K562 (cell line): ENCODE measurements at regions of chr4 and their contacts with region 1.

Region 1: DNA sequence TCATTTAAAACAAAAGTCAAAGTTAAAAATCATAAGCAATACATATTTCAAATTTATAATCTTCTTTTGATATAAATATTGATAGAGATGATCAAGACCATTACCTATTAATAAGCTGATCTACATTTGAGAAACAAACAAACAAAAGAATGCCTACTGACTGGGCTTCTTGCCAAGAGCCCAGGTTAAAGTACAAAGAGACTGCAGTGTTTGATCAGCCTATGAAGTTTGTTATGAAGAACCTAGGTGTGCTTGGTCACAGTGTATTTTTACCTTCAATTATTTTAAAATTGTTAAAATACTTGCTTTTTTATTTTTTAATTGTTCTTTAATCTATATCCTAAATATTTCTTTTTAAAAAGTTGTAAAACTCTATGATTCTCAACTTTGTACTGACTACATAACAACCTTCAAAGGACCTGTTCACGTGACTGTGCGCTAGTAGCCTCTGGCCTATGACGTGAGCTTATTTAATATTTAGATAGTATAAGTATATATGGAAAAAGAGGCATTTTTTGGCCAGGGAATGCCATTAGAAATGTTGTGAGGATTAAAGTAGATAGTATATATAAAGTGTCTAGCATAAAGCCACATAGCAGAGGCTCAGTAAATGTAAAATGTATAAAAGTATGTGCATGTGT is 11.4 kb upstream of the SLC39A8 start:
- DNase-seq: no peak
- ATAC-seq: no peak
- H3K4me3 ChIP-seq: no peak overlapping the region
- H3K27ac ChIP-seq: no peak overlapping the region
- H3K4me1 ChIP-seq: peaks cover 0 to 3% of the 10 kb centered on the region in 2 experiments; a peak in 2 of 5 replicates
- H3K27me3 ChIP-seq: no peaks in the 10 kb centered on the region
- CTCF ChIP-seq: no peak
- EP300 ChIP-seq: no peak
- POLR2A ChIP-seq: no peak
- RAD21 ChIP-seq: no peak

Region 2: DNA sequence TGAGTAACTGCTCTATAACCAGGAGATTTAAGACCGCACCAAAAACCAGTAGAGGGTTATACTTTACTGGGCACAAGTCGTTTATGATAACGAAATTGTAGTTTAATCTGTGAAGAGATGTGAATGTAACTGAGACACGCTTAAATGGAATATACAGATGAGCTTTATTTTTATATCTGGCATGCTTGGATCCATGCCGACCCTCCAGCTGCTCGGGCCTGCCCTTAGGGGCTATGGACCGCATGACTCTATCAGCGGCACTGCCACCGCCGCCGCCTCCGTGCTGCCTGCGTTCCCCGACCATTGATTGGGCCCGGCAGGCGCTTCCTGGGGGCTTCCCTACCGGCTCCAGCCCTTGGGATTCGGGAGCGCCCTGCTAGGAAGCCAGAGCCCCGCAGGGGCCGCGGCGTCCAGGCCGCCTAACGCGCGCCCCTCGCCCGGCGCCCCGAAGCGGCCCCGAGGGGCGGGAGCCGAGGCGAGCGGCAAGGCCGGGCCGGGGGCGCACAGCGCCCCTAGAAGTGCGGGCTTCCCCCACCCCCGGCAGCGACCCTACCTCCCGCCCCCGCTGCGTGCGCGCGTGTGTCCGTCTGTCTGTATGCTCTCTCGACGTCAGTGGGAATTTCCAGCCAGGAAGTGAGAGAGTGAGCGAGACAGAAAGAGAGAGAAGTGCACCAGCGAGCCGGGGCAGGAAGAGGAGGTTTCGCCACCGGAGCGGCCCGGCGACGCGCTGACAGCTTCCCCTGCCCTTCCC is 144.2 kb after region 1 on chr4 and contains the start of gene NFKB1:
- CTCF ChIA-PET with region 1: no interaction called
- POLR2A ChIA-PET with region 1: no interaction called
- in situ Hi-C with region 1: no loop called
- intact Hi-C with region 1: loop called (anchors 5 kb)
- DNase-seq: peak in 3 of 4 experiments; percentile 37 to 44 (median 39)
- ATAC-seq: peak; percentile 23
- H3K4me3 ChIP-seq: peak within 1 kb of the TSS; percentile 81
- H3K27ac ChIP-seq: peak within 1 kb of the TSS; percentile 91
- H3K4me1 ChIP-seq: peaks cover 13 to 18% of the 10 kb centered on the region in 2 experiments; a peak in 4 of 5 replicates
- H3K27me3 ChIP-seq: no peaks in the 10 kb centered on the region
- CTCF ChIP-seq: no peak
- EP300 ChIP-seq: no peak
- POLR2A ChIP-seq: no peak
- RAD21 ChIP-seq: no peak
- polyA plus RNA-seq, gene NFKB1: 2.4 to 3.2 TPM

Region 3: GRCh38 chr4:102815981-102816380 is 459.3 kb after region 1 on chr4:
- CTCF ChIA-PET with region 1: no interaction called
- POLR2A ChIA-PET with region 1: no interaction called
- in situ Hi-C with region 1: no loop called
- intact Hi-C with region 1: no loop called
- DNase-seq: no peak
- ATAC-seq: no peak
- H3K4me3 ChIP-seq: no peak overlapping the region
- H3K27ac ChIP-seq: 0 out of 3 replicates have a peak overlapping the region, but pooled peaks have one; percentile 19
- H3K4me1 ChIP-seq: peaks cover 8 to 27% of the 10 kb centered on the region in 2 experiments; a peak in 4 of 5 replicates
- H3K27me3 ChIP-seq: no peaks in the 10 kb centered on the region
- CTCF ChIP-seq: no peak
- EP300 ChIP-seq: no peak
- POLR2A ChIP-seq: no peak
- RAD21 ChIP-seq: no peak